Endothelial cell of umbilical vein (primary cell): ENCODE measurements at regions of chr11 and their contacts with region 1.

Region 1: GRCh38 chr11:108467091-108467823 is at the start of gene C11orf65:
- DNase-seq: peak; percentile 99
- H3K4me3 ChIP-seq: peak within 1 kb of the TSS; percentile 38 to 86 (median 62)
- H3K27ac ChIP-seq: peak within 1 kb of the TSS; percentile 97
- H3K4me1 ChIP-seq: peaks cover 3% of the 10 kb centered on the region
- H3K27me3 ChIP-seq: no peaks in the 10 kb centered on the region
- CTCF ChIP-seq: no peak
- POLR2A ChIP-seq: peak; percentile 97
- total RNA-seq, gene C11orf65: not detected in 2 replicates

Region 2: DNA sequence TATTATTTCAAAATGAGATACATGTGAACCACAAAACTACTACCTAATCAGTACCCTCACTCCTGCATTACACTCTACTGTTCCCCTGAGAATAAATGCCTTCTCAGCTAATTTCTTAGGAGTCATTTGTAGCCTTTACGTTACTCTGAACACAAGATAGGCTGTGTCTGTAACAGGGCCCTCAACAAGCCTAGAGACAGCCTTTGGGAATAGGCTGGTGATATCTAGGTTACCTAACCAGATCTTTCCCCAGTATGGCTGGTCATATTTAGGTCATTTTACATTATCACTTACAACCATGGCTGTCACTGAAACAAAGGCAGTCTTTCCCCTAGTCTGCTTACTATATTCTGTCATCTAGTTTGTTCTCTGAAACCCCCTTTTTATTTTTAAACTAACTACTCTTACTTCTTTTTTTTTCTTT is 230.2 kb before region 1 on chr11:
- CTCF ChIA-PET with region 1: no interaction called
- POLR2A ChIA-PET with region 1: no interaction called
- dilution Hi-C with region 1: no loop called
- intact Hi-C with region 1: loop called (anchors 1 kb)
- DNase-seq: no peak
- H3K4me3 ChIP-seq: no peak overlapping the region
- H3K27ac ChIP-seq: peak overlapping the region; percentile 94
- H3K4me1 ChIP-seq: peaks cover 16% of the 10 kb centered on the region
- H3K27me3 ChIP-seq: no peaks in the 10 kb centered on the region
- CTCF ChIP-seq: no peak
- POLR2A ChIP-seq: no peak

Region 3: GRCh38 chr11:108593214-108593922 is 126.1 kb after region 1 on chr11 and contains the start of gene EXPH5:
- CTCF ChIA-PET with region 1: no interaction called
- POLR2A ChIA-PET with region 1: no interaction called
- dilution Hi-C with region 1: no loop called
- intact Hi-C with region 1: loop called (anchors 2 kb)
- DNase-seq: peak; percentile 80
- H3K4me3 ChIP-seq: peak within 1 kb of the TSS; percentile 47 to 96 (median 81)
- H3K27ac ChIP-seq: no peak within 1 kb of the TSS
- H3K4me1 ChIP-seq: peaks cover 3% of the 10 kb centered on the region
- H3K27me3 ChIP-seq: peaks cover 24 to 35% of the 10 kb centered on the region in 2 experiments
- CTCF ChIP-seq: no peak
- POLR2A ChIP-seq: no peak
- total RNA-seq, gene EXPH5: 0.09 TPM in 1 of 2 replicates, not detected in the other

Region 4: DNA sequence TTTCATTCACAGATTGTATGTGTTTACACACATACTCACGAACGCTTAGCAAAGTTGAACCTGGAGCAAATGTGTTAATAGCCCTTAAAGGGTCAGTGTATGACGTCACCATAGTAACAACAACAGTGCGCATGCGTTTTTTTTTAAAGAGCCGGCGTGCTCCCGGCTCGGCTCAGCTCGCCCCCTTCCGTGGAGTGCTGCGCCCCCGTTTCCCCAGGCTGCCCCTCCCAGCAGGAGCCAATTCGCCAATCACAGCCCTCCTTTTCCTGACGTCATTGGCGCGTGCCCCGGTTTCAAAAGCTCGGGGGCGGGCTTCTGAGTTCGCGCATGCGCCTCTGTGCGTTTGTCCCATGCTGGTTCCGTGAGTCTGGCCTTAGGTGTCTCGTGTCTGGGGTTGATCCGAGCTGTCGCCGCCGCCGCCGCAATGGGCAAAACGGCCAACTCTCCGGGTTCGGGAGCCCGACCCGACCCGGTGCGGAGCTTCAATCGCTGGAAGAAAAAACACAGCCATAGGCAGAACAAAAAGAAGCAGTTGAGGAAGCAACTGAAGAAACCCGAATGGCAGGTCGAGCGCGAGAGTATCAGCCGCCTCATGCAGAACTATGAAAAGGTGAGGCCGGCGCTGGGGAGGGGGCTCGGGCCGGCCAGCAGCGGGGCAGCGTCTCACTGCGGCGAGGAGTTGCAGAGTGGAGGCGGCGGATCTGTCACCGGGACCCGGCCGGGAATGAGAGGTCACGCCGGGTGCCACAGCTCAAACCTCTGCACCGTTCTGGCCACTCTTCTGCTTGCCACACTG is 197.7 kb after region 1 on chr11 and contains the start of gene DDX10:
- CTCF ChIA-PET with region 1: no interaction called
- POLR2A ChIA-PET with region 1: no interaction called
- dilution Hi-C with region 1: no loop called
- intact Hi-C with region 1: loop called (anchors 1 kb)
- DNase-seq: peak; percentile 99
- H3K4me3 ChIP-seq: peak within 1 kb of the TSS; percentile 52 to 96 (median 85)
- H3K27ac ChIP-seq: peak within 1 kb of the TSS; percentile 21
- H3K4me1 ChIP-seq: peaks cover 21% of the 10 kb centered on the region
- H3K27me3 ChIP-seq: no peaks in the 10 kb centered on the region
- CTCF ChIP-seq: peak in 1 of 2 donors; percentile 9
- POLR2A ChIP-seq: no peak
- total RNA-seq, gene DDX10: 35.2 and 48.9 TPM in 2 replicates

Region 5: DNA sequence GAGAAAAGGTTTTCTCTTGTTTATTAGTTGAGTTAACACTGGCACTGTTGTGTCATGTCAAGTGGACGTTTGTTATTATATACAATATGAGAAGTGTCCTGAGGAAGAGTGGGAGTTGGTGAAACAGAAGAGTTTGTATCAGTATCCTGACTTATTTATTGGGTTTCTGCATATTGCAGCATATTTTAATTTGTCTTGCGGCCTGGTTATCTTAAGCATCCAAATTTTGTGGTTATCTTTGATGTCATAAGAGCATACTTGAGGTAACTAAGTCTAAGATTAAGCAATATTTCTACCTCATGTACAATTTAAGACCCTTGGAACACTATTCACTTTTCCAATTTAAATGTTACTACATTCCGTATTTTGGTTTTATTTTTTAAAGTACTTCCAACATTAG is 301.1 kb after region 1 on chr11:
- CTCF ChIA-PET with region 1: no interaction called
- POLR2A ChIA-PET with region 1: no interaction called
- dilution Hi-C with region 1: no loop called
- intact Hi-C with region 1: no loop called
- DNase-seq: no peak
- H3K4me3 ChIP-seq: no peak overlapping the region
- H3K27ac ChIP-seq: no peak overlapping the region
- H3K4me1 ChIP-seq: no peaks in the 10 kb centered on the region
- H3K27me3 ChIP-seq: no peaks in the 10 kb centered on the region
- CTCF ChIP-seq: no peak
- POLR2A ChIP-seq: no peak